Heart left ventricle (tissue), 16 donors: ENCODE measurements at regions of chr1 and their contacts with region 1.

Region 1: GRCh38 chr1:243917177-243917862 is 67.3 kb upstream of the AKT3 start:
- DNase-seq: peak in 4 of 5 donors; percentile 27 to 42 (median 33)
- ATAC-seq: peak; percentile 67 to 88 (median 80)
- H3K4me3 ChIP-seq: peak overlapping the region; percentile 24 to 62 (median 52)
- H3K27ac ChIP-seq: peak overlapping the region in 5 of 12 donors; percentile 16 to 51 (median 22)
- H3K4me1 ChIP-seq: peaks cover 0 to 16% (median 9%) of the 10 kb centered on the region in 12 donors
- H3K27me3 ChIP-seq: peaks cover 0 to 41% (median 16%) of the 10 kb centered on the region in 9 donors
- CTCF ChIP-seq: peak in 3 of 12 donors; percentile 19 to 23 (median 21)
- POLR2A ChIP-seq: no peak

Region 2: GRCh38 chr1:243850452-243851256 is 66.7 kb before region 1 on chr1:
- intact Hi-C with region 1: loop called in 2 of 10 experiments (anchors 2 to 5 kb)
- DNase-seq: peak; percentile 80 to 87 (median 83)
- ATAC-seq: peak; percentile 22 to 70 (median 66)
- H3K4me3 ChIP-seq: peak overlapping the region; percentile 73 to 90 (median 80)
- H3K27ac ChIP-seq: peak overlapping the region; percentile 90 to 98 (median 94)
- H3K4me1 ChIP-seq: peaks cover 0 to 24% (median 8%) of the 10 kb centered on the region in 12 donors
- H3K27me3 ChIP-seq: peaks cover 0 to 24% (median 0%) of the 10 kb centered on the region in 9 donors
- CTCF ChIP-seq: no peak
- POLR2A ChIP-seq: peak in 1 of 2 donors; percentile 24

Region 3: DNA sequence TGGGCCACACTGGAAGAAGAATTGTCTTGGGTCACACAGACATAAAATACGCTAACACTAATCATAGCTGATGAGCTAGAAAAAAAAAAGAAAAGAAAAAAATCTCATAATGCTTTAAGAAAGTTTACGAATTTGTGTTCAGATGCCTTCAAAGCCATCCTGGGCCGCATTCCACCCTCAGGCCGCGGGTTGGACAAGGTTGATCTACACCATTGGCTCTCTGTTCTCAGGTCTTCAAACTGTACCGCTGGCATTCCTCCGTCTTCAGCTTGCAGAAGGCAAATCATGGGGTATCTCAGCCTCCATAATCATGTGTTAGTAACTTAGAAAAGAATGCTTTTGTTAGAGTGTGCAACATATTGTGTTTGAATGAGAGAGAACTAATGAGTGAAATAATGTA is 52.4 kb before region 1 on chr1:
- intact Hi-C with region 1: loop called in 1 of 10 experiments (anchors 10 kb)
- DNase-seq: no peak
- ATAC-seq: no peak
- H3K4me3 ChIP-seq: no peak overlapping the region
- H3K27ac ChIP-seq: no peak overlapping the region
- H3K4me1 ChIP-seq: no peaks in the 10 kb centered on the region
- H3K27me3 ChIP-seq: no peaks in the 10 kb centered on the region
- CTCF ChIP-seq: no peak
- POLR2A ChIP-seq: no peak

Region 4: GRCh38 chr1:244128591-244129383 is 211.5 kb after region 1 on chr1:
- intact Hi-C with region 1: no loop called
- DNase-seq: no peak
- ATAC-seq: no peak
- H3K4me3 ChIP-seq: no peak overlapping the region
- H3K27ac ChIP-seq: no peak overlapping the region
- H3K4me1 ChIP-seq: no peaks in the 10 kb centered on the region
- H3K27me3 ChIP-seq: no peaks in the 10 kb centered on the region
- CTCF ChIP-seq: no peak
- POLR2A ChIP-seq: no peak